MCF 10A (cell line): ENCODE measurements at regions of chr10 and their contacts with region 1.

Region 1: GRCh38 chr10:4813023-4813422 is 13.0 kb upstream of the AKR1E2 start:
- DNase-seq: peak; percentile 76
- H3K4me3 Mint-ChIP-seq: no peak overlapping the region
- H3K27ac Mint-ChIP-seq: no peak overlapping the region
- H3K4me1 Mint-ChIP-seq: peaks cover 18% of the 10 kb centered on the region
- H3K27me3 Mint-ChIP-seq: no peaks in the 10 kb centered on the region
- CTCF ChIP-seq: no peak

Region 2: DNA sequence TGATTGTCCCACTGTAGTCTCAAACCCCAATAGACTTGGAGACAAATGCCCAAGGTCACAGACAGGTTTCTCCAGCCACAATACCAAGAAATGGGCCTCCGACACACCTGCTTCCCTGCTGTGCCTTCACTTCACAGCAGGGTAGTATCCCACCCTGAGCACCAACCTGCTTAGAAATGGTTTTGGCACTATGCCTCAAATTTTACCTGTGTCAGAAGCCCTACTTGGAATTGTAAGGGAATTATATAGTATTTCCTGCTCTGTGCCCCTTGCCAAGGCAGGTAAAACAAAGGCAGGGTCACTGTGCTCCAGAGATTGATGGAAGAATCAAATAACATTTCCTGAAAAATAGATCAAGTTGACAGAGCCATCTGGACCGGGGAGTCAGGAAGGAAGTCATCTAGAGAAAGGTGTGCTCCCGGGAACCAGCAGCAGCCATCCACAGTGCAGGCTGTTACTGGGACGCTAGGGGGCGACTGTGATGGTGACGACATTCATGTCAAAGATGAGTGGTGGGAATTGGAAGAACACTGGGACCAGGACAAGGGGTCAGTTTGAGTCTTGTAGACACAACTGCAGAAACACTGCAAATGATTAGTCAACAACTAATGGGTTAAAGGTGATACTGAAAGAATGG is 104.8 kb before region 1 on chr10:
- CTCF ChIA-PET with region 1: no interaction called
- POLR2A ChIA-PET with region 1: no interaction called
- intact Hi-C with region 1: no loop called
- DNase-seq: peak; percentile 12
- H3K4me3 Mint-ChIP-seq: no peak overlapping the region
- H3K27ac Mint-ChIP-seq: peak overlapping the region; percentile 16
- H3K4me1 Mint-ChIP-seq: peaks cover 12% of the 10 kb centered on the region
- H3K27me3 Mint-ChIP-seq: no peaks in the 10 kb centered on the region
- CTCF ChIP-seq: no peak

Region 3: GRCh38 chr10:4981722-4982471 is 168.9 kb after region 1 on chr10:
- CTCF ChIA-PET with region 1: interaction called, 10 read pairs
- POLR2A ChIA-PET with region 1: no interaction called
- intact Hi-C with region 1: no loop called
- DNase-seq: peak; percentile 56
- H3K4me3 Mint-ChIP-seq: no peak overlapping the region
- H3K27ac Mint-ChIP-seq: no peak overlapping the region
- H3K4me1 Mint-ChIP-seq: peaks cover 7% of the 10 kb centered on the region
- H3K27me3 Mint-ChIP-seq: no peaks in the 10 kb centered on the region
- CTCF ChIP-seq: peak; percentile 43

Region 4: DNA sequence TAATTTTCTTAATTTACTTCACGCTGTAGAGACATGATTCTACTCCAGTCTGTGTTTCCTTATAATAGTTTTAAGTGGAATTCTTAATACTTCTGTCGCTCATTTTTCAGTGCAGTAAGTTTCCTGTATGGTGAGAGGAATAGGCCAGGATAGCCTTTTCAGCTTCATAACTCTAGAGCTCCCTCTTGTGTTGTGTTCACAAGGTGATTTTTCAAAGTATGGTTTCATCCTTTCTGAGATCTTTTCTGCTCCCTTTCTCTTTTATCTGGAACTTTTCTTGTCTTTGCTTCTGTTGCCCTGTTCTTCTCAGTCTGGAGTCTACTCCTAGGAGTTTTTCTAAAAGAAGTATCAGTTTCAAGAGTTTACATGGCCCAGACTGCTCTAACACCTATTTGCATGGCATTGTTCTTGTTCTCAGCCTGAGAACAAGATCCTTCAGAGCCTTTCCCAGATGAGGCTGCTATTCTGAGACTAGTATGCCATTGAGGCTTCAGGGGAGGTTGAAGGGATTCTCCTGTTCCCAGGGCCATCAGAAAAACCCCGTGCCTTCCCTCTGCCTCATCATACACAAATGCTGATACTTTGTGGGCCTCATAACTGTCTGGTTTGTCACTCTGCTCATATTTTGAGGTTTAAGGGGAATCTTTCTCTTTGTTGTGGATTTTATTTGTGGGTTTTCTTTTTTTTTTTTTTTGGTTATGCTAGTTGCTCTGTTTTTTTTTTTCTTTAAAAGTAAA is 621.2 kb after region 1 on chr10:
- CTCF ChIA-PET with region 1: interaction called, 61 read pairs
- POLR2A ChIA-PET with region 1: interaction called, 4 read pairs
- intact Hi-C with region 1: loop called (anchors 1 kb)
- DNase-seq: peak; percentile 64
- H3K4me3 Mint-ChIP-seq: peak overlapping the region; percentile 22
- H3K27ac Mint-ChIP-seq: peak overlapping the region; percentile 75
- H3K4me1 Mint-ChIP-seq: peaks cover 25% of the 10 kb centered on the region
- H3K27me3 Mint-ChIP-seq: no peaks in the 10 kb centered on the region
- CTCF ChIP-seq: peak; percentile 80